ENCODE measurements at regions of chr19 and their contacts with region 1.

Region 1: DNA sequence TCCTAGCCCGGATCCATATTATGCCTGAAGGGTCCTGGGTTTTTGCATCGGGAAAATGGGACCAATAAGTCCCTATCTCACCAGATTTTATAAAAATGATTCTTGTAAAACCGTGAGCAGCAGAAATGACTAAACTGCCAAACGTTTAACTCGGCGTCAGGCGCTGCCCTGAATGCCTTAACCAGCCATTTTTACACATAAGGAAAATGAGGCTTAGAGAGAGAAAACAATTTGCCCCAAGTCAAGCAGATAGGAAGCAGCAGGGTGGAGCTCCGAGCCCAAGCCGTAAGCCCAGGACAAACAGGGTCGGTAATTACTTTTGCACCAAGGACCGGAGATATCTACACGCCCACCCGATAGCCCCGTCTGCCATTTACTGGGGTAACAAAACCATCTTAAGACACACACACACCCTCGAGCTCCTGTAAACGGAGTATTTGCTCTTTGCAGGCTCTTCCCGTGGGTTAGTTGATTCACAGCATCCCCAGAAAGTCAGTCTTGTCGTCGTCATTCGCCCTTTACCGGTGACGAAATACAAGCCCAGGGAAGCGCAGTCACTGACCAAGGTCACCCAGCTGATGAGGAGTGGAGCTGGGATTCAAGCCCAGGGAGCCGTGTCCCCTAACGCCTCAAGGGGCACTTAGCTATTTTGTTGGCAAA is 16.0 kb upstream of the MRI1 start:
- DNase-seq: peak; percentile 30
- ATAC-seq: peak; percentile 3
- H3K4me3 Mint-ChIP-seq: peak overlapping the region; percentile 94
- H3K27ac Mint-ChIP-seq: peak overlapping the region; percentile 96
- H3K4me1 Mint-ChIP-seq: peaks cover 33% of the 10 kb centered on the region
- H3K27me3 Mint-ChIP-seq: no peaks in the 10 kb centered on the region

Region 2: DNA sequence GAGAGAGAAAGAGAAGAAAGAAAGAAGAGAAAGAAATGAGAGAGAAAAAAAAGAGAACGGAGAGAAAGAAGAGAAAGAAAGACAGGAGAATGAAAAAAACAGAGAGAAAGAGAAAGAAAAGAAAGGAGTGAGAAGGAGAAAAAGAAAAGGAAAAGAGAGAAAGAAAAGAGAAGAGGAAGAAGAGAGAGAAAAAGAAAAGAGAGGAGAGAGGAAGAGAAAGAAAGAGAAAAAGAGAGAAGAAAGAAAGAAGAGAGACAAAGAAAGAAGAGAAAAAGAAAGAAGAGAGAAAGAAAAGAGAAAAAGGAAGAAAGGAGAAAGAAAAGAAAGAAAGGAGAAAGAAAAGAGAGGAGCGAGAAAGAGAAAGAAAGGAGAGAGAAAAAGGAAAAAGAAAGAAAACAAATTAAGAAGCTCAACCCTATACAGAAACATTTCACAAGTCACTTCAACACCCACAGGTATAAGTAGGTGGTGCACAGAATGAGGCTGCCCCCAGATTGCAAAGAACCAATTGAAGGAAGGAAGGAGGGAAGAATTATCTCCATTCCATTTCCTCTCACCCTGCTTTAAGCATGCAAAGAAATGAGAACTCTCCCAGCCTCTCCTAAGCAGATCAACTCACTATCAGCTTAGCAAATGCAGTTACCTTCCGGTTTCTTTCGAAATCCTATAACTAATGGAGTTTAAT is 143.3 kb before region 1 on chr19:
- CTCF ChIA-PET with region 1: no interaction called
- POLR2A ChIA-PET with region 1: no interaction called
- DNase-seq: no peak
- ATAC-seq: no peak
- H3K4me3 Mint-ChIP-seq: no peak overlapping the region
- H3K27ac Mint-ChIP-seq: no peak overlapping the region
- H3K4me1 Mint-ChIP-seq: peaks cover 3% of the 10 kb centered on the region
- H3K27me3 Mint-ChIP-seq: no peaks in the 10 kb centered on the region

Region 3: GRCh38 chr19:13707915-13708314 is 40.4 kb before region 1 on chr19:
- CTCF ChIA-PET with region 1: no interaction called
- POLR2A ChIA-PET with region 1: no interaction called
- DNase-seq: no peak
- ATAC-seq: no peak
- H3K4me3 Mint-ChIP-seq: no peak overlapping the region
- H3K27ac Mint-ChIP-seq: no peak overlapping the region
- H3K4me1 Mint-ChIP-seq: no peaks in the 10 kb centered on the region
- H3K27me3 Mint-ChIP-seq: peaks cover 5% of the 10 kb centered on the region

Region 4: DNA sequence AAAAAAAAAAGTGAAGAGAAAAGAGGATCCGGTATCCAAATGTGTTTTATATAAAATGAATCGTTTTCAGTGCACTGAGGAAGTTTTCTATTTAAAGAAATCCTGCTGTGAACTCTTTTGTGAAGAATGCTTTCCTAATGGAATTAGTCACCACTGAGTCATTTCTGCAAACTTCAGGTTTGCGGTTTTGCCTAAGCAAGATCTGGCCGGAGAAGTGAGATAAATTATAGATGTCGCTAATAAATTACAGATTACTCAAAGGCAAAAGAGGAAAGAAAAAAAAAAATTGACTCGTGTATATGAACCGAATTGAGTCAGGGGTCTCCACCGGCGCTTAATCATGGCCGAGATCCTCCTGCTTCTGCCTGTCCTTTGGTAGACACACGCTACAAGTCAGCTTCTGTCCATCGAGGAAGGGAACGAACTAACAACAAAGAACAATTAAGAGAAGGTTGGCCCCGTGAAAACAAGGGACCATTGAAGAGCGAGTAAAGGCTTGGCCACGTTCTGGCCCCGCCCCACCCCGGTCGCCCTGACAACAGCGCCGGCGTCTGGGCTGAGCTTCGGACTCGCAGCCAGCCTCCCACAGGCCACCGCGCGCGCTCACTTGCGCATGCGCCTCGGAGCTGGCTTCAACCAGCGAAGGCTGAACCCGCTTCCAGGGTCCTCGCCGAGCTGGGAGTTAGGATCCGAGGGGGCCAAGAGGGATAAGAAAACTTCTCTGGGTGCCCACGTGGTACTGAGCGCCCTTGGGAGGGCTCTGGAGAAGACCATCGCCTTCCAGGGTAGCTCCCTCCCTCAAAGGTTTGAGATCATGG is 16.9 kb before region 1 on chr19:
- CTCF ChIA-PET with region 1: interaction called, 8 read pairs
- POLR2A ChIA-PET with region 1: interaction called, 14 read pairs
- DNase-seq: peak; percentile 97
- ATAC-seq: peak; percentile 100
- H3K4me3 Mint-ChIP-seq: peak overlapping the region; percentile 84
- H3K27ac Mint-ChIP-seq: peak overlapping the region; percentile 82
- H3K4me1 Mint-ChIP-seq: peaks cover 17% of the 10 kb centered on the region
- H3K27me3 Mint-ChIP-seq: no peaks in the 10 kb centered on the region

Region 5: GRCh38 chr19:13833330-13834243 is 85.3 kb after region 1 on chr19:
- CTCF ChIA-PET with region 1: no interaction called
- POLR2A ChIA-PET with region 1: interaction called, 13 read pairs
- DNase-seq: peak; percentile 93
- ATAC-seq: peak; percentile 64
- H3K4me3 Mint-ChIP-seq: peak overlapping the region; percentile 68
- H3K27ac Mint-ChIP-seq: peak overlapping the region; percentile 81
- H3K4me1 Mint-ChIP-seq: peaks cover 51% of the 10 kb centered on the region
- H3K27me3 Mint-ChIP-seq: no peaks in the 10 kb centered on the region

Region 6: DNA sequence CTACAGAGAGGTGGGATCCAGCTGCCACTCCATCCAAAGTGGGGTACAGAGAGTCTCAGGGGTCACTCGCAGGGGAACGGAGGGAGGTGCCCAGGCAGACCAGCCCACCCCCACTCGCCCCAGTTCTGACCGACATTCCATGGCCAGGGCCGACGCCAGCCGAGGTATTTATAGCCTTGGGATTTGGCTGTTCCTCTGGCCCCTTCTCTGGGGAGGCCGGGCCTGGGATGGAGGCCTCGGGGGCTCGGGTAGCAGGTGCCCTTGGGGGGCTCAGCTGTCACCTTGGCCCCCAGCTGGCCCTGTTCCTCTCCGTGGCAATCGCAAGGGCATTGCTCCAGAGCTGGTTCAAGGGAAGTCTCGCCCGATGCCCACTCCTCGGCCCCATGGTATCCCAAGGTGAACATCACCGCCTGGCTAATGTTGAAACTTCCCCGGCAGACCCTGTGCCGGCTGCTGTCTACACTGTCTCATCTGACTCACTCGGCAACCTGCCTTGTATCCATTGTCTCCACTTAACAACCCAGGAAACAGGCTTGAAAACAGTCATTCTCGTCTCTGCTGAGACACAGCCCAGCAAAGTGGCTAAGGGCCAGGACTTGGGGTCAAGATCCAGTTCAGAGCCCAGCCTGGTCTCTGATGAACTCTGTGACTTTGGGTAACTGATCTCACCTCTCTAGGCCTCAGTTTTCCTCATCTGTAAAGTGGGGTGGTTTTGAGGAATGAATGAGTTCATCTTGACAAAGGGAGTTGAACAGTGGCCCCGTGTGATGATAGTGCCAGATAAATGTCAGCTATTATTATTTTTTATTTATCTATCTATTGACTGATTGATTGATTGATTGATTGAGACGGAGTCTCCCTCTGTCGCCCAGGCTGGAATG is 359.5 kb after region 1 on chr19:
- CTCF ChIA-PET with region 1: no interaction called
- POLR2A ChIA-PET with region 1: no interaction called
- DNase-seq: no peak
- ATAC-seq: no peak
- H3K4me3 Mint-ChIP-seq: no peak overlapping the region
- H3K27ac Mint-ChIP-seq: no peak overlapping the region
- H3K4me1 Mint-ChIP-seq: peaks cover 19% of the 10 kb centered on the region
- H3K27me3 Mint-ChIP-seq: no peaks in the 10 kb centered on the region

Measured in activated CD8-positive, alpha-beta T cell treated with anti-CD3 and anti-CD28 coated beads, Interleukin-2, amount 10 ng/mL, durations not matched to agents 7 days and 5 days (primary cell).